CD4-positive, alpha-beta memory T cell (primary cell): ENCODE measurements at regions of chr1 and their contacts with region 1.

Region 1: DNA sequence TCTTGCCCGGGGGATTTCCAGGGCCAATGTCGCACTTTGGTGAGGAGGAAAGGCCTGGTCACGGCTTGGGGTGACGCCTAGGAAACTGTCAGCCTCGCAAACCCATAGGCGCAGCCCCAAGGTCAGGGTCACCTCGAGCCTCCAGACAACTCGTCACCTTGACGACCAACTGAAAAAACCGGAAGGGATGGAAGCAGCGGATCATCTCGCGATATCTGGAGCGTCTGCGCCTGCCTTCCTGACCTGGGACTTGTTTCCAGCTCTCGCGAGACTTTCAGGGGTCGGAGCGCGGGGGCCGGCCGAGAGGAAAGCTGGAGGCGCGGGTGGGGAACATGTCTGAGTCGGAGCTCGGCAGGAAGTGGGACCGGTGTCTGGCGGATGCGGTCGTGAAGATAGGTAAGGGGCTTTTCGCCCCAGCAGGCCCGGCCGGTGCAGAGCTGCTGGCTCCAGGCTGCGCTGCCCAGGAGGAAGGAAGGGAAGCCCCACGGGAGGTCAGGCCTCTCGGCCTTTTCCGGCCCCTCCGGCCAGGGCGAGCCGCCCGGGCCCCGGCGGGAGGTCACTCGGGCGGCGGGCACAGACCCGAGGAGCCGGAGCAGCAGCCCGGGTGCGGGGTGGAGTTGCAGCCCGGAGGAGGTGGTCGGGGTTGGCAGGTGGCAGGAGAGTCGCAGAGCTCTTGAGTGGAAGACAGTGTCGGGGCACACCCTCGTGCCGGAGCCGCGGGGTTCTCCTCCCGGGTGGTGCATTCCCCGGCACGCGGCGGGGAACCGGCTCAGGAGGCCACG is 47.2 kb upstream of the NBL1 start:
- DNase-seq: peak; percentile 97 to 99 (median 98)
- H3K4me3 ChIP-seq: peak overlapping the region; percentile 63 to 88
- H3K4me3 Mint-ChIP-seq: peak overlapping the region; percentile 89 to 100 (median 98)
- H3K27ac ChIP-seq: peak overlapping the region; percentile 100
- H3K27ac Mint-ChIP-seq: peak overlapping the region; percentile 98 to 100 (median 100)
- H3K4me1 ChIP-seq: peaks cover 51% of the 10 kb centered on the region
- H3K4me1 Mint-ChIP-seq: peaks cover 33 to 54% (median 44%) of the 10 kb centered on the region in 4 donors
- H3K27me3 ChIP-seq: no peaks in the 10 kb centered on the region
- H3K27me3 Mint-ChIP-seq: peaks cover 0 to 4% of the 10 kb centered on the region in 2 donors

Region 2: DNA sequence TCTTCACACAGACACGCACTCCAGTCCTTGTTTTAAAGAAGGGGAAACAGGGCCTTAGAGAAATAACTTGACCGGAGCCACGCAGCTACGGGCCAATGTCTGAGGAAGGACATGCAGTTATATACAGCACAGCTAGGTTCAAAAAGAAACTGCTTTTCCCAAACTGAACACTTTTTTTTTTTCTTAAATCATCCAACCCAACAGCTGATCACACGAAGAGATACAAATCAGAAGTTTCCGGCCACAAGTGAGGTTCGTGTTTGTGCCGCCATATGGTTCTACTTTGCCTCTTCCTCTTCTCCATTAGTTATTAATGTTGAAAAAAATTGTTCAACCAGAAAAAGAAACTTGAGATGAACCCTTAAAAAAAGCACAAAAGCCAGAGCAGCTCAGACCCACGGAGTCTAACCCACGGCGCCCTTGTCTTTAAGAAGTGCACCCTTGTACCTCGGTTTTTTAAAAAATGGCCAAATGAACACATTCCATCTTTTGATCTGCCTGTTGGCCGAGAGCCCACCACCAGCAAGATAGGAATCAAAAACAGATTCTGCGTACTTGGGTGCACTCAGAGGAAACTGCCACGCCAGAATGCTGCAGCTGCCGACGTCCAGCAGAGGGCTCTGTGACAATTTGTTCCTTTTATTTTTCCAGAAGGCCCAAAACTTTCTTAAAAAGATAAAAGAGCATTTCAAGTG is 205.9 kb before region 1 on chr1:
- CTCF ChIA-PET with region 1: interaction called, 3 read pairs
- POLR2A ChIA-PET with region 1: interaction called, 23 read pairs
- intact Hi-C with region 1: loop called (anchors 1 kb)
- DNase-seq: peak; percentile 83 to 88 (median 86)
- H3K4me3 ChIP-seq: peak overlapping the region; percentile 34 to 46
- H3K4me3 Mint-ChIP-seq: peak overlapping the region; percentile 84 to 94 (median 87)
- H3K27ac ChIP-seq: peak overlapping the region; percentile 64
- H3K27ac Mint-ChIP-seq: peak overlapping the region; percentile 92 to 99 (median 96)
- H3K4me1 ChIP-seq: peaks cover 89% of the 10 kb centered on the region
- H3K4me1 Mint-ChIP-seq: peaks cover 56 to 95% (median 78%) of the 10 kb centered on the region in 4 donors
- H3K27me3 ChIP-seq: no peaks in the 10 kb centered on the region
- H3K27me3 Mint-ChIP-seq: no peaks in the 10 kb centered on the region

Region 3: GRCh38 chr1:19468397-19468956 is 128.4 kb before region 1 on chr1:
- CTCF ChIA-PET with region 1: interaction called, 4 read pairs
- POLR2A ChIA-PET with region 1: interaction called, 16 read pairs
- intact Hi-C with region 1: loop called (anchors 2 kb)
- DNase-seq: peak; percentile 65 to 86 (median 72)
- H3K4me3 ChIP-seq: peak overlapping the region; percentile 23 to 28
- H3K4me3 Mint-ChIP-seq: peak overlapping the region; percentile 71 to 87 (median 80)
- H3K27ac ChIP-seq: peak overlapping the region; percentile 59
- H3K27ac Mint-ChIP-seq: peak overlapping the region; percentile 86 to 97 (median 95)
- H3K4me1 ChIP-seq: peaks cover 97% of the 10 kb centered on the region
- H3K4me1 Mint-ChIP-seq: peaks cover 72 to 98% (median 86%) of the 10 kb centered on the region in 4 donors
- H3K27me3 ChIP-seq: no peaks in the 10 kb centered on the region
- H3K27me3 Mint-ChIP-seq: no peaks in the 10 kb centered on the region

Region 4: DNA sequence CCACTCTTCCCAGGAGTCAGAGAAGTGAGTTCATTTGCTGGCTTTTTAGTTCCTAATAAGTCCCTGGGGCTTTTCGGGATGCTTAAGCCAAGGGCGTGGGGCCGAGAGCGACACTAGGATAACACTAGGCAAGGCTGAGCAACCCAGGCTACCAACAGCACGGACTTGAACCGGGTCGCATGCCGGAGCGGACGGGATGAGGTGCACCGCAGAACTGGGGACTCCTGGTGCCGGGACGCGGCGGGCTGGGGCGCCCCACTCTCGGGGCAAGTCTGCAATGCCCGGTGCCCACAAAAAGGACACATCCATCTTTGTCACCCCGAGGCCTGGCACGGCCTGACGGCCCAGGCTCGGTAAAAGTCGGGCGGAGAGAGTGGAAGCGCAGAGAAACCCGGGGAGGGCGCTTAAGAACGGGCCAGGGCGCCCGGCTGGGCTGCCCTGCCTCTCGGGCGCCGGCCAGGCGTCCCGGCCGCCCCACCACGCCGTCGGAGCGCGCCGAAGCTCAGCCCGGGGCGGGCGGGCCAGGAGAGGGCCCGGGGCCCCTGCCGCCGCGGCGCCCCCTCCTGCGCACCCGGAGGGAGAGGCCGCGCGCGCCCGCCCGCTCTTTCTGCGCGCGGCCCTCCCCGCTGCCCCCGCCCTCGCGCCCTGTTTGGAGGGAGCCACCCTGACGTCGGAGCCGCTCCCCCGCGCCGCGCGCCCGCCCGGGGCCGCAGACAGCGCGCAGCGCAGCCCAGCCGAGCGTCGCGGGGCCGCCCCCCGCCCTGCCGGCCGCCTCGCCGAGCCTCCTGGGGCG is 46.9 kb after region 1 on chr1 and contains the start of gene NBL1:
- CTCF ChIA-PET with region 1: no interaction called
- POLR2A ChIA-PET with region 1: interaction called, 45 read pairs
- intact Hi-C with region 1: loop called (anchors 1 kb)
- DNase-seq: peak; percentile 72 to 83 (median 79)
- H3K4me3 ChIP-seq: peak within 1 kb of the TSS; percentile 36 to 67
- H3K4me3 Mint-ChIP-seq: peak within 1 kb of the TSS; percentile 95 to 99 (median 97)
- H3K27ac ChIP-seq: peak within 1 kb of the TSS; percentile 60
- H3K27ac Mint-ChIP-seq: peak within 1 kb of the TSS; percentile 94 to 97 (median 96)
- H3K4me1 ChIP-seq: peaks cover 25% of the 10 kb centered on the region
- H3K4me1 Mint-ChIP-seq: peaks cover 19 to 43% (median 29%) of the 10 kb centered on the region in 4 donors
- H3K27me3 ChIP-seq: no peaks in the 10 kb centered on the region
- H3K27me3 Mint-ChIP-seq: peaks cover 6 to 7% of the 10 kb centered on the region in 2 donors
- total RNA-seq, gene NBL1: 22.8 to 24.6 TPM

Region 5: DNA sequence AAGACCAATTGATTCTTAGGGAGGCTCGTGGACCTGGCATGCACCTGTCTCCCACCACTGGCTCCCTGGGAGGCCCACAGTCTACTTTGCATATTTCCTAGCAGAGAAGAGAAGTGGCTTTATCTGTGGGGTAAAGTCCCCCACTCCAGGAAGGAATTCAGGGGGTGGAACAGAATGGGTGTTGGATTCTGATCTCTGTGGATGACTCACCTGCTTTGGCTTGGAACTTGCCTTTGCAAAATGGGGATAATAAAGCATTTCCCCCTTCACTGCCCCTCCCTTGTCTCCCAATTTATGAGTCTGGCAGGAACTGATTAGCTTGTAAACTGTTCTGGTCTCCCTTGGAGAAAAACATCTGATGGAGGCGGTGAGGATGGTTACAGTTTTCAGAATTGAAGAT is 264.1 kb after region 1 on chr1:
- CTCF ChIA-PET with region 1: no interaction called
- POLR2A ChIA-PET with region 1: no interaction called
- intact Hi-C with region 1: no loop called
- DNase-seq: no peak
- H3K4me3 ChIP-seq: no peak overlapping the region
- H3K4me3 Mint-ChIP-seq: no peak overlapping the region
- H3K27ac ChIP-seq: no peak overlapping the region
- H3K27ac Mint-ChIP-seq: no peak overlapping the region
- H3K4me1 ChIP-seq: no peaks in the 10 kb centered on the region
- H3K4me1 Mint-ChIP-seq: no peaks in the 10 kb centered on the region
- H3K27me3 ChIP-seq: no peaks in the 10 kb centered on the region
- H3K27me3 Mint-ChIP-seq: peaks cover 11 to 24% of the 10 kb centered on the region in 2 donors